Endothelial cell of umbilical vein (primary cell): ENCODE measurements at regions of chr5 and their contacts with region 1.

Region 1: GRCh38 chr5:169442403-169442874 is 141.1 kb upstream of the SPDL1 start:
- DNase-seq: no peak
- H3K4me3 ChIP-seq: no peak overlapping the region
- H3K27ac ChIP-seq: no peak overlapping the region
- H3K4me1 ChIP-seq: peaks cover 7% of the 10 kb centered on the region
- H3K27me3 ChIP-seq: no peaks in the 10 kb centered on the region
- CTCF ChIP-seq: no peak
- POLR2A ChIP-seq: no peak

Region 2: DNA sequence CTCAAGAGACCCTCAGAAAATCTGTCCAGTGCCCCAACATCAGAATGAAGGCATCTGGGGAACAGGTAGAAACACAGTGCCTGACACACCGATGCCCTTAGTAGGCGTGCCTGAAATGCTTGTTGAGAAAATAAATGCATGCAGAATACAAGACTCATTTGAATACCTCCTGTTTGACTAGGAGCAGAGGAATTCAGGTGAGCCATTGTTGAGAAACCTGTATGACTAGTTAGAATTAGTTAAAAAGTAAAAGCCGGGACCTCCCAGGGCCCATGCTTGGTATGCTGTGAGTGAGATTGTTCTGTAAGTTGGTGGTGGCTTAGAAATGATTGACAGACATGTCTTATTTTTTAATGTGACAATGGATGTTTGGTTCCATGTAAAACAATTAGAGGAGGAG is 1096.0 kb before region 1 on chr5:
- CTCF ChIA-PET with region 1: no interaction called
- POLR2A ChIA-PET with region 1: no interaction called
- dilution Hi-C with region 1: no loop called
- intact Hi-C with region 1: no loop called
- DNase-seq: no peak
- H3K4me3 ChIP-seq: no peak overlapping the region
- H3K27ac ChIP-seq: no peak overlapping the region
- H3K4me1 ChIP-seq: no peaks in the 10 kb centered on the region
- H3K27me3 ChIP-seq: no peaks in the 10 kb centered on the region
- CTCF ChIP-seq: no peak
- POLR2A ChIP-seq: no peak

Region 3: GRCh38 chr5:169404223-169404622 is 38.2 kb before region 1 on chr5:
- CTCF ChIA-PET with region 1: no interaction called
- POLR2A ChIA-PET with region 1: no interaction called
- dilution Hi-C with region 1: no loop called
- intact Hi-C with region 1: loop called (anchors 5 kb)
- DNase-seq: no peak
- H3K4me3 ChIP-seq: no peak overlapping the region
- H3K27ac ChIP-seq: no peak overlapping the region
- H3K4me1 ChIP-seq: no peaks in the 10 kb centered on the region
- H3K27me3 ChIP-seq: no peaks in the 10 kb centered on the region
- CTCF ChIP-seq: no peak
- POLR2A ChIP-seq: no peak

Region 4: DNA sequence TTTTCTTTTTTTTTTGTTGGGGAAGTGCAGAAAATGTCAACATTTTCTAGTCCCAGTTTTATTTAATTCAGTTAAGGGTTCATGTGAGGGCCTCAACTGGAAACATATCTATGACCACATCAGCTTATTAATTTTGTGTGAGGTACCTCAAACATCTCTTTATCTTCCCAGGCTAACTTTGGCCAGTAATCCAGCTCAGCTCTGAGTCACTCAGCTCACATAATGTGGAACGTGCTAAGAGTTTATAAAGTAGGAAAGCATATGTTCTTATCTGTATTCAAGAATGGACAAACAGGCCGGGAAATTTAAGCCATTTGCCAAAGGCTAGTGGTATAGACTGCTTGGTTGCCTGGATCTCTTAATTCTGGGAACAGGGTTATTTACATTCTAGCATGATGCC is 419.5 kb after region 1 on chr5:
- CTCF ChIA-PET with region 1: no interaction called
- POLR2A ChIA-PET with region 1: no interaction called
- dilution Hi-C with region 1: no loop called
- intact Hi-C with region 1: no loop called
- DNase-seq: no peak
- H3K4me3 ChIP-seq: no peak overlapping the region
- H3K27ac ChIP-seq: no peak overlapping the region
- H3K4me1 ChIP-seq: no peaks in the 10 kb centered on the region
- H3K27me3 ChIP-seq: no peaks in the 10 kb centered on the region
- CTCF ChIP-seq: no peak
- POLR2A ChIP-seq: no peak